ENCODE measurements at regions of chr22 and their contacts with region 1.

Region 1: GRCh38 chr22:46116491-46116958 is 33.8 kb upstream of the PPARA start:
- DNase-seq: peak; percentile 95
- ATAC-seq: peak; percentile 96
- H3K4me3 Mint-ChIP-seq: no peak overlapping the region
- H3K27ac Mint-ChIP-seq: no peak overlapping the region
- H3K4me1 Mint-ChIP-seq: peaks cover 3% of the 10 kb centered on the region
- H3K27me3 Mint-ChIP-seq: no peaks in the 10 kb centered on the region

Region 2: GRCh38 chr22:45577746-45578523 is 538.6 kb before region 1 on chr22:
- CTCF ChIA-PET with region 1: no interaction called
- POLR2A ChIA-PET with region 1: no interaction called
- intact Hi-C with region 1: loop called in 1 of 2 experiments (anchors 10 kb)
- DNase-seq: peak; percentile 89
- ATAC-seq: peak; percentile 71
- H3K4me3 Mint-ChIP-seq: no peak overlapping the region
- H3K27ac Mint-ChIP-seq: no peak overlapping the region
- H3K4me1 Mint-ChIP-seq: no peaks in the 10 kb centered on the region
- H3K27me3 Mint-ChIP-seq: peaks cover 11% of the 10 kb centered on the region

Region 3: GRCh38 chr22:46006379-46007002 is 110.0 kb before region 1 on chr22:
- CTCF ChIA-PET with region 1: interaction called, 83 read pairs
- POLR2A ChIA-PET with region 1: no interaction called
- intact Hi-C with region 1: loop called (anchors 1 kb)
- DNase-seq: peak; percentile 94
- ATAC-seq: peak; percentile 91
- H3K4me3 Mint-ChIP-seq: no peak overlapping the region
- H3K27ac Mint-ChIP-seq: no peak overlapping the region
- H3K4me1 Mint-ChIP-seq: peaks cover 7% of the 10 kb centered on the region
- H3K27me3 Mint-ChIP-seq: no peaks in the 10 kb centered on the region

Region 4: DNA sequence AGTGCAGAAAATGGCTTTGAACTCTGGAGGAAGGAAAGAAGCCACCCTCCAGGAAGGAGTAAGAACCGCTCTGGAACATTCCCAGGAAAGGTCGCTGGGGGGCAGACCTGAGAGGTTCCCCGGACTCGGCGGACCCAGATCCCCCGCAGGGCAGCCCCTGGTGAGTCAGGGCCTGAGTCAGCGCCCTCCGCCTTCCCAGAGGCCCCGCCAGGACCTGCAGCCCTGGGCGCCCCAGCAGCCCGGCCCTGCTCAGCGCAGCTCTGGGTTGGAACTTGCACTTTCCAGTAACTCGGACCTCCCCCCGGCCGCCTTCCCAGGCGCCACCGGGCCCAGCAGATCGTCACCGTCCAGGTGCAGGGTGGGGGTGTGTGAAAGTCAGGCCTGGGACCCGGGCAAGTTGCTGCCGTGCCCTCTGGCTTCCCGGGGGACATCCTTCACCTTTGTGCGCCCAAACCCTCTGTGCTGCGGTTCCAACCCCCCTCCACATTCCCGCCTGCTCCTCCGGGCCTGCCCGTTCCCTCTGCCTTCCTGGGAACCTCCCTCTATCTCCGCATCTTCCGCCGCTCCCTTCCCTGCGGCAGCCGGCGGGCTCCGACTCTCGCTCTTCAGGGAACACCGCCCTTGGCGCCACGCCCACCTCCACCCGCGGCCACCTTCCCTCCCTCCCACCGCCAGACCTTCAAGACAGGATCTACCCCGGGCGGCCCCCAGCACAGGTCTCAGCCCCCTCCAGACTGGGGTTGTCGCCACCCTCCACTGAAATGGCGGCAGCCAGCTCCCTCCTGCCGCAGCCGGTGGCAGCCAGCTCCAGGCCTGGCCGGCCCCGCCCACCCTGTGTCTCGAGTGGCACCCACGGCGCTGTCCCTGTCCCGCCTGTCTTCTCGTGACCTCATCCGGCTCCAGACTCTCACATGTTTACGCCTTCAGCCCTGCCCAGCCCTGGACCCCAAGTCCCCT is 102.8 kb before region 1 on chr22:
- CTCF ChIA-PET with region 1: interaction called, 83 read pairs
- POLR2A ChIA-PET with region 1: no interaction called
- intact Hi-C with region 1: loop called (anchors 1 kb)
- DNase-seq: peak; percentile 96
- ATAC-seq: peak; percentile 99
- H3K4me3 Mint-ChIP-seq: peak overlapping the region; percentile 80
- H3K27ac Mint-ChIP-seq: peak overlapping the region; percentile 86
- H3K4me1 Mint-ChIP-seq: peaks cover 4% of the 10 kb centered on the region
- H3K27me3 Mint-ChIP-seq: no peaks in the 10 kb centered on the region

Region 5: DNA sequence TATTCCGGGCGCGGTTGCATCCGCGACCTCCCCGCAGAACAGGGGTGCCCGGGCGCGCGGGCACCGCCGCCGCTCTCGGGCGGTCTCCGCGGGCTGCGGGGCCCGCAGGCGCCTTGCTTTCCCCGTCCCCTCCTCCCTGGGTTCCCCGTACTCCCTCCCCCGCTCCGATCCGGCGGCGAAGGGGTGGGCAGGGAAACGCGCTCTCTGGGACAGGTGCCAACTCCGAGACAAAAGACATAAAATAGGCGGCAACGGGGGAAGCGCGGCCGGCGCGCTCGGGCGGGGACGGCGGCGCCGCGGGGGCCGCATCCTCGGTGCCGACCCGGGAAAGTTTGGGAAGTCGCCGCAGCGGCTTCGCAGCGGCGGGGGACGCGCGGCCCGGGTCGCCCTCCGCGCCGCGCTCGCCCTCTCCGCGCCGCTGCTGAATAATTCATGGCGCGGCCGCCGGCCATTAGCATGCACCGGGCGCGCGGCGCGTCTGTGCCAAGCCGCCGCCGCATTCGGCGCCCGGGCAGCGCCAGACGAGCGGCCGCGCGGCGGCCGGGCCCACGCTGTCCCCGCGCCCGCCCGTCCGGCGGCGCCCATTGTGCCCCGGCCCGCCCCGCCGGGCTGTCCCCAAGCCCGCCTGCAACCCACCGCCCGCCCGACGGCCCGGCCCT is 44.9 kb before region 1 on chr22:
- CTCF ChIA-PET with region 1: interaction called, 8 read pairs
- POLR2A ChIA-PET with region 1: no interaction called
- intact Hi-C with region 1: loop called in 1 of 2 experiments (anchors 2 kb)
- DNase-seq: peak; percentile 80
- ATAC-seq: peak; percentile 30
- H3K4me3 Mint-ChIP-seq: peak overlapping the region; percentile 74
- H3K27ac Mint-ChIP-seq: peak overlapping the region; percentile 69
- H3K4me1 Mint-ChIP-seq: peaks cover 40% of the 10 kb centered on the region
- H3K27me3 Mint-ChIP-seq: no peaks in the 10 kb centered on the region